Activated B cell treated with CpG ODN at 0.5 μM for 24 hours (primary cell): ENCODE measurements at regions of chr3 and their contacts with region 1.

Region 1: DNA sequence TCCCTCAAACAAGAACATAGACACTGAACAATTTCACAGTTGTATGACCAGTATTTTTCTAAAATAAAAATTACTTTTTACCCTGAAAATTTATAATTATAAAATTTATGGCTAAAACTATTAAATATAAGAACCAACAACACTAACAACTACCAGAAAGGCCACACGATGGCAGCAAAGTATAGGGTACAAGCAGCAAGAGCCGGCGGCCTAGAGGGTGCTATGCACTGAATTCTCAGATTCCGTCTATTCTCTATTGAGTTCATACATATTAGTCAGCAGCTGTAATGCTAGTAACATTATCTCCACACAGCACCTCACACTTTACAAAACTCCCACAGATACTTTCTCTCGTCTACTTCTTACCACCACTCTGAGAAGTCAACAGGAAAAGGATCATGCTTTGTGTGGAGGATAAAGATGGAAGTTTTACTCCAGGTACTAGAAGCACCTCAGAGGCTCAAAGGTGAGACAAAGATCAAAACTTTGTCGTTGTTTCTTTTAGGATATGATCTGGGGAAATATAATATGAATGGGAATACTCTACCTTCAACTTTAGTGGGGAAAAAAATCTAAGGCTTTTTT is 160.5 kb downstream of the FGF12 start:
- DNase-seq: no peak
- ATAC-seq: no peak
- H3K4me3 Mint-ChIP-seq: no peak overlapping the region
- H3K27ac Mint-ChIP-seq: no peak overlapping the region
- H3K4me1 Mint-ChIP-seq: peaks cover 8% of the 10 kb centered on the region
- H3K27me3 Mint-ChIP-seq: peaks cover 15% of the 10 kb centered on the region
- CTCF ChIP-seq: peak; percentile 17

Region 2: DNA sequence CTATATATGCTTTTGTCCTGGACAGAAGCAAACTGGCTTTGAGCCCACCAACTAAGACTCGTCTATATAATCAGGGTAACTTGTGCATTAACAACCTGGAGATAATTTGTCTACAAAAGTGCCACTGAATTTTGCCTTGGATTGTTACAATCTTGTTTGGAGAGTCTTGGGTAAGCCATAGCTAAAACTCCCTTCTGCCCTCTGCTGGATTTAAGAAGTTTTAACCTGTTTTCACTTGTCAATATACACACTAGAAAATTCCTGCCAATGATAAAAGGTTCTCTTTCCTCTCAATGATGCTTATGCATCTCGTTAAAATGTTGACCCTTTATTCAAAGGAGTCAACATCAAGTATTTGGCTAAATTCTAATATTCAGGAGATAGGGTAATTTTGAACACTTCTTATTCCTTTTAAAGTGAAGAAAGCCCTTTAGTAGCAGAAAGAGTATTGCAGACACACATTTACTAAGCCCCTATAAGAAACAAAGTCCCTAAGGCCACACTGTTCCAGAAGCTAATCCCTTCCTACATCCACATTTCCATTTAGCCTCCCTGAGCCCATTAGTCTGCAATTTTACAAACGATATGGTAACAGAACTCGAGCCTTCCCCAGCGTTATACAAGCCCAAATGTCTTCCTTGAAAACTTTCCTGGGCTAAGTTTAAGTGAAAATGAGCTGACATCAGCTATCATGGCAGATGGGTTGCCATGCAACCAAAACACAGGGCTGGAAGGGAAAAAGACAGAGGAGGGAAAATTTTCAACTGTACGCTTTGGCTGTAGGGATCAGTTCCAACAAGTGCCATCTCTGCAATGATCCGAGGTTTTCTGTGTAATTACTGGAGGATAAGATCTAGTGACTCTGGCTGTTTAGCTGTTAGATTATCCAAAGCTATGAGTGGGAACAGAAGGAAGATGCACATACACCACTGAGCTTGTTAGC is 236.4 kb after region 1 on chr3:
- CTCF ChIA-PET with region 1: no interaction called
- POLR2A ChIA-PET with region 1: no interaction called
- intact Hi-C with region 1: loop called (anchors 1 kb)
- DNase-seq: no peak
- ATAC-seq: no peak
- H3K4me3 Mint-ChIP-seq: no peak overlapping the region
- H3K27ac Mint-ChIP-seq: no peak overlapping the region
- H3K4me1 Mint-ChIP-seq: no peaks in the 10 kb centered on the region
- H3K27me3 Mint-ChIP-seq: no peaks in the 10 kb centered on the region
- CTCF ChIP-seq: no peak

Region 3: GRCh38 chr3:193572426-193572908 is 1005.7 kb after region 1 on chr3:
- CTCF ChIA-PET with region 1: interaction called, 3 read pairs
- POLR2A ChIA-PET with region 1: no interaction called
- intact Hi-C with region 1: loop called (anchors 1 kb)
- DNase-seq: no peak
- ATAC-seq: peak; percentile 52
- H3K4me3 Mint-ChIP-seq: no peak overlapping the region
- H3K27ac Mint-ChIP-seq: no peak overlapping the region
- H3K4me1 Mint-ChIP-seq: no peaks in the 10 kb centered on the region
- H3K27me3 Mint-ChIP-seq: no peaks in the 10 kb centered on the region
- CTCF ChIP-seq: peak; percentile 54

Region 4: DNA sequence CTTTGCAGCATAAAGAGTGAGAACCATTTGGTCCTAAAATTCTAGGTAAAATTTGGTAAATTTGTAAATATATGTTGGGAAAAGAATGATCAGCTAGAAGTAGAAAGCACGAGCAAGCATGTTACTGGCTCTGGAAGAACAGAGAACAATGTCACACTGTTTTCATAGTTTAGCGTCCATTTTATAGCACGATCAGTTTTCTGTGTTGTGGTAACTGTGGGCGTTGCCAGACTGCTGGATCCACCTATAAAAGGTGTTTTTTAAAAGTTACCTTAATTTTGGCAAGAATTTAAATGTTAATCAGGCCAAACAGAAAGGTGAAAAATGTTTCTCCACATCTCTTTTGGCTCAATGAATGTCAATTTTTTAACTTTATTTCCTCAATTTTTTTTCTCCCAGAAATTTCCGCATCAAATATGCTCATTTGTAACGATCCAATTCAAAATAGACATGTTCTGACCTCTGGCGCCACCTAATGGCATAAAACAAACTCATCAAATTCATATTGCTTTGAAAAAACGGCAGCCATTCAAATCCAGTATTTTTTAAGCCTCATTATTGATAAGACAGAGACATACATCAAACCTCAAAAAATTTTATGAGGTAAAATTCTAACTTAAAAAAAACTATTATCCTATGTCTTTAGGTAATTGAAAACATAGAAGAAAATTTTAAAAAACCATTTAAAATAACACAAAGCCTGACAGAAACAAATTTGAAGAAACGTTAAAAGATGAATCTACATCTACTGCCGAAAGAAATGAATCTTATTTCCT is 1837.8 kb after region 1 on chr3:
- CTCF ChIA-PET with region 1: no interaction called
- POLR2A ChIA-PET with region 1: no interaction called
- intact Hi-C with region 1: loop called (anchors 10 kb)
- DNase-seq: no peak
- ATAC-seq: no peak
- H3K4me3 Mint-ChIP-seq: no peak overlapping the region
- H3K27ac Mint-ChIP-seq: no peak overlapping the region
- H3K4me1 Mint-ChIP-seq: peaks cover 2% of the 10 kb centered on the region
- H3K27me3 Mint-ChIP-seq: peaks cover 5% of the 10 kb centered on the region
- CTCF ChIP-seq: peak; percentile 58